ENCODE measurements at regions of chr18 and their contacts with region 1.

Region 1: DNA sequence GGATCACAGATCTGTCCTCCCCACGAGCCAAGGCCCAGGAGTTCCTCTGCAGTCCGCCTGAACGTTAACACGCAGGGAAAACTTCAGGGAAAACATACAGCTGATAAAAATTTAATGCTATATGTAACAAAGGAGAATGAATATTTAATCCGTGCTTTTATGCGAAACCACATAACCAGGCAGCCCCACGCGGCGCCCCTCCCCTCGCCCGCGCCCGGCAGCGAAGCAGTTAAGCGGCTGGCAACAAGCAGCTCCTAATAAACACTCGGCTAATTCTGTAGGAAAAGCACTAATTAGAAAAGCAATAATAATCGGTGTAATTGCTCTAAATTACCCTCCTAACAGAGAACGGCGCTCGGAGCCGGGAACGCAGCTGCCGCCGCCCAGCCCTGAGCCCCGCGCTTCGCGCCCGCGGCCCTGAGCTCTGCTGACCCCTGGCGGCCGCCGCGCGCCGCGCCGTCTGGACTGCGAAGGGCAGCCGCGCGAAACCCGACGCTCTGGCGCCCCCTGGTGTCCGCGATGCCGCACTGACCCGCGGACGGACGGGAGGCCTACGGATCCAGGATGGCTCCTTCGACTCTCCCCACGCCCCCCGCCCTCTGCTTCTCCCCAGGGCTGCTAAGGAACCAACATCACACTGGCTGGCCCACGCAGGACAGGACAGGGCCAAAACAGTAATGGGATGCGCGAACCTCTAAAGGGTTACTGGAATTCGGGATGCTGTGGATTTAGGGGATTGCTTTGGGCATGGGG is 181.4 kb downstream of the SMAD2 start:
- DNase-seq: peak; percentile 56 to 83 (median 76)
- H3K4me3 ChIP-seq: peak overlapping the region in 1 of 4 donors; percentile 46
- H3K27ac ChIP-seq: no peak overlapping the region
- H3K4me1 ChIP-seq: peaks cover 0 to 3% of the 10 kb centered on the region in 2 donors
- H3K27me3 ChIP-seq: peaks cover 8% of the 10 kb centered on the region
- CTCF ChIP-seq: peak; percentile 77 to 100 (median 90)
- POLR2A ChIP-seq: no peak

Region 2: DNA sequence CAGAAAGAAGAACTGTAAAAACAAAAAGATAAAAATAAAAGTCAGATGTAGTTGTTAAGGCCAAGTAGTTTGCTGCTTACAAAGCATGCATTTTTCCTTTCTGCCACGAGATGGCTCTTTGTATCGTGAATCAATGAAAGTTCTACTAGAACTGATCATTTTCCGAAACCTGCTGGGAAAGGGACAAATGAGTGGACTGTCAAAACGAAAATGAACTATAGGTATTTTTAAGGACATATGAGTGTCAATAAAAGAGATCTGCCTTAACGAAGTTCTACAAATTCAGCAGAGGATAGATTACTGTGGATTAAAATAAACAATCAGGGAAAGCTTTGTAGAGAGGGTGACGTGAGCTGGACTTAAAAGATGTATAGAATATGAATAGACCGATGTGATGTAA is 698.6 kb before region 1 on chr18:
- intact Hi-C with region 1: loop called in 1 of 2 experiments (anchors 5 kb)
- DNase-seq: peak in 4 of 7 donors; percentile 16 to 47 (median 34)
- H3K4me3 ChIP-seq: no peak overlapping the region
- H3K27ac ChIP-seq: no peak overlapping the region
- H3K4me1 ChIP-seq: no peaks in the 10 kb centered on the region
- H3K27me3 ChIP-seq: no peaks in the 10 kb centered on the region
- CTCF ChIP-seq: peak; percentile 49 to 69 (median 66)
- POLR2A ChIP-seq: no peak

Region 3: GRCh38 chr18:47215554-47216138 is 533.4 kb before region 1 on chr18:
- intact Hi-C with region 1: loop called in 1 of 2 experiments (anchors 5 kb)
- DNase-seq: peak; percentile 19 to 54 (median 27)
- H3K4me3 ChIP-seq: no peak overlapping the region
- H3K27ac ChIP-seq: no peak overlapping the region
- H3K4me1 ChIP-seq: no peaks in the 10 kb centered on the region
- H3K27me3 ChIP-seq: peaks cover 35% of the 10 kb centered on the region
- CTCF ChIP-seq: peak; percentile 15 to 75 (median 60)
- POLR2A ChIP-seq: no peak

Region 4: DNA sequence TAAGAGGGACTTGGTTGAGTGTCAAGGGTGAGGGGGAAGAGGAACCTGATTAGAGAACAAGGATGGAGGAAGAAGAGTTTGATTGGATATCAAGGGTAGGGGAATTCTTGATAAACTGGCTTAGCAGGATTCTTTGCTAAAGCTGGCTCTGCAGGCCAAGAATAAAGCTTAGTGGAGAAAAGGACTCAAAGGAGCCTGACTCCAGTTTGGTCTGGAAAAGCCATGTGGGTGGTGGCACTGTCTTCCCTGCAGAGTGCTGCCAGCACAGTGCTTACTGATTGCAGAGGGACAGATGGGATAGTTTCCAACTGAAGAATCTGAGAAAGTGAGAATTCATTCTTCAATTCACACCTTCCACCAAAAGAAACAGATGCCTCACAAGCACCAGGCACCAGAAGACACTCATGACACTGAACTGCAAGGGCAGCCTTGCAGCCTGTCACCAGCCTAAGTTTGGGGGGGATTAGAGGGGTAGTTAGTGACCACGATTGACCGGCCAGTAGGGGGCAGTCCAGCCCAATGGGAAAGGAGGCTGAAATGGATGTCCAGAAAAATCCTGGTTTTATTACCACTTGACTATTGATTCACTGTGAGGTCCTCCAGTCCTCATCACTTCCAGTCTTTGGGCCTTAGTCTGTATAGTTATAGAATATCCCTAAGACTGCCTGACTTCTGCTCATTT is 153.1 kb before region 1 on chr18:
- intact Hi-C with region 1: loop called in 1 of 2 experiments (anchors 10 kb)
- DNase-seq: peak in 5 of 7 donors; percentile 13 to 41 (median 24)
- H3K4me3 ChIP-seq: no peak overlapping the region
- H3K27ac ChIP-seq: no peak overlapping the region
- H3K4me1 ChIP-seq: no peaks in the 10 kb centered on the region
- H3K27me3 ChIP-seq: peaks cover 16% of the 10 kb centered on the region
- CTCF ChIP-seq: peak in 5 of 6 experiments; percentile 18 to 40 (median 38)
- POLR2A ChIP-seq: no peak

Region 5: GRCh38 chr18:48165111-48165835 is 416.2 kb after region 1 on chr18:
- intact Hi-C with region 1: no loop called
- DNase-seq: peak in 6 of 7 donors; percentile 48 to 72 (median 64)
- H3K4me3 ChIP-seq: no peak overlapping the region
- H3K27ac ChIP-seq: peak overlapping the region; percentile 64 to 83 (median 70)
- H3K4me1 ChIP-seq: peaks cover 47 to 86% of the 10 kb centered on the region in 2 donors
- H3K27me3 ChIP-seq: no peaks in the 10 kb centered on the region
- CTCF ChIP-seq: no peak
- POLR2A ChIP-seq: peak in 1 of 2 donors; percentile 50

Region 6: GRCh38 chr18:49206717-49207116 is 1457.7 kb after region 1 on chr18:
- intact Hi-C with region 1: no loop called
- DNase-seq: no peak
- H3K4me3 ChIP-seq: no peak overlapping the region
- H3K27ac ChIP-seq: no peak overlapping the region
- H3K4me1 ChIP-seq: no peaks in the 10 kb centered on the region
- H3K27me3 ChIP-seq: no peaks in the 10 kb centered on the region
- CTCF ChIP-seq: no peak
- POLR2A ChIP-seq: no peak

Measured in adrenal gland (tissue), 19 donors.